ENCODE measurements at regions of chr2 and their contacts with region 1.

Region 1: GRCh38 chr2:170928824-170929685 is at the start of gene GORASP2:
- DNase-seq: peak; percentile 95 to 99 (median 99)
- H3K4me3 ChIP-seq: peak within 1 kb of the TSS; percentile 95
- H3K4me3 Mint-ChIP-seq: peak within 1 kb of the TSS; percentile 90 to 98 (median 96)
- H3K27ac ChIP-seq: peak within 1 kb of the TSS; percentile 79
- H3K27ac Mint-ChIP-seq: peak within 1 kb of the TSS; percentile 91 to 98 (median 96)
- H3K4me1 ChIP-seq: peaks cover 37% of the 10 kb centered on the region
- H3K4me1 Mint-ChIP-seq: peaks cover 43 to 52% (median 50%) of the 10 kb centered on the region in 3 donors
- H3K27me3 ChIP-seq: no peaks in the 10 kb centered on the region
- H3K27me3 Mint-ChIP-seq: no peaks in the 10 kb centered on the region
- total RNA-seq, gene GORASP2: 70.7 to 80.9 TPM

Region 2: GRCh38 chr2:170812710-170813600 is 116.1 kb before region 1 on chr2:
- CTCF ChIA-PET with region 1: no interaction called
- POLR2A ChIA-PET with region 1: no interaction called
- DNase-seq: peak in 2 of 5 donors; percentile 36 to 46
- H3K4me3 ChIP-seq: no peak overlapping the region
- H3K4me3 Mint-ChIP-seq: peak overlapping the region in 1 of 7 donors; percentile 12
- H3K27ac ChIP-seq: no peak overlapping the region
- H3K27ac Mint-ChIP-seq: no peak overlapping the region
- H3K4me1 ChIP-seq: peaks cover 23% of the 10 kb centered on the region
- H3K4me1 Mint-ChIP-seq: peaks cover 17 to 43% (median 27%) of the 10 kb centered on the region in 3 donors
- H3K27me3 ChIP-seq: peaks cover 45% of the 10 kb centered on the region
- H3K27me3 Mint-ChIP-seq: peaks cover 53 to 77% of the 10 kb centered on the region in 2 donors

Region 3: DNA sequence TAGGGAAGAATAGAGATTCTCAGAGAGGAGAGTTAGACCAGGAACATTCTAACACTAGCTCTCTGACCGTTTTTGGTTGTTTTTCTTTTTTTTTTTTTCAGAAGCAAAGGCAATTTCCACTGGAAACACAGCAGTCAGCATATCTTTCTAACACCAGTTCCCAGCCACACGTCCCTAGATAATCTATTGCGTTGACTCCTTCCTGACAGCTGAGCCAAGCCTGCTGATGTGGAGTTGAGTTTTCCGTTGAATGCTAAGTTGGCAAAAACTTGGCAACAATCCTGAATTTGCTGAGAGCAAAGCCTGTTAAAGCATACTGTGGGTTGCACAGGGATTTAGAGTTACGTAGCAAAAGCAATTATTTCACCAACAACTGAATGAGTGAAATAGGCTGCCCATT is 93.0 kb before region 1 on chr2:
- CTCF ChIA-PET with region 1: no interaction called
- POLR2A ChIA-PET with region 1: no interaction called
- DNase-seq: no peak
- H3K4me3 ChIP-seq: no peak overlapping the region
- H3K4me3 Mint-ChIP-seq: no peak overlapping the region
- H3K27ac ChIP-seq: no peak overlapping the region
- H3K27ac Mint-ChIP-seq: no peak overlapping the region
- H3K4me1 ChIP-seq: no peaks in the 10 kb centered on the region
- H3K4me1 Mint-ChIP-seq: no peaks in the 10 kb centered on the region
- H3K27me3 ChIP-seq: peaks cover 6% of the 10 kb centered on the region
- H3K27me3 Mint-ChIP-seq: peaks cover 11 to 49% of the 10 kb centered on the region in 2 donors

Region 4: DNA sequence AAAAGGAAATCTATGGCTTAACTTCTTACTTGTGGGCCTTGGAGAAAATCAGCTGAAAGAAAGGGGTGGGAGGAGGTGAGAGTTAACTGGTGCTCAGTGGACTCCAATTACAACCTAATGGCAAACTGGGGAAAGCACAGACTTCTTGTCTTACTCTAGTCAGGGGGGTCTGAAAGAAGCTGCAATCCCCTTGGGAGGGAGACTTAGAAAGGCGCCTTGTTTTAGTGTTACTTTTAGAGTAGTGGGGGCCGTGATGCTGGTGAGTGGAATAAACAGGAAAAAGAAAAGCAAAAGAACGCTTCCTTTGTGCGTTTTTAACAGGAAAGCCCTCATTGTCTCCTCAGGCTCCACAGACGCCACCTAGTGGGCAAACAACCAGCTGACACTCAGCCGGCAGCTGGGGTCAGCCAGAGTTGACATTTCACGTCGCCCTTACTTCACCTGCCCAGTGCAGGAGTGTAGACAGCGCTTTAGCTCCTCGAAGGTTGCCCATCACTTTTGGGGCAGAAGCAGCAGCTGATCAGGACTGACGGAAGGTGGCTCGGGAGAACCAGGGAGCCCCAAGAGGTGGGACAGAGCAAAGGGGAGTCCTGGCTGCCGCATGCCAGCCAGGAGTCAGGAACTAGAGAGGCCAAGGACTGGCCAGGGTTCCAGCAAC is 55.9 kb before region 1 on chr2:
- CTCF ChIA-PET with region 1: interaction called, 10 read pairs
- POLR2A ChIA-PET with region 1: no interaction called
- DNase-seq: peak; percentile 49 to 78 (median 57)
- H3K4me3 ChIP-seq: peak overlapping the region; percentile 47
- H3K4me3 Mint-ChIP-seq: peak overlapping the region in 6 of 7 donors; percentile 77 to 84 (median 80)
- H3K27ac ChIP-seq: no peak overlapping the region
- H3K27ac Mint-ChIP-seq: peak overlapping the region in 6 of 8 donors; percentile 12 to 47 (median 22)
- H3K4me1 ChIP-seq: peaks cover 4% of the 10 kb centered on the region
- H3K4me1 Mint-ChIP-seq: peaks cover 10 to 18% (median 13%) of the 10 kb centered on the region in 3 donors
- H3K27me3 ChIP-seq: no peaks in the 10 kb centered on the region
- H3K27me3 Mint-ChIP-seq: peaks cover 2 to 20% of the 10 kb centered on the region in 2 donors

Region 5: GRCh38 chr2:170940066-170940465 is 11.0 kb after region 1 on chr2:
- CTCF ChIA-PET with region 1: interaction called, 27 read pairs
- POLR2A ChIA-PET with region 1: no interaction called
- DNase-seq: no peak
- H3K4me3 ChIP-seq: no peak overlapping the region
- H3K4me3 Mint-ChIP-seq: peak overlapping the region in 3 of 7 donors; percentile 7 to 33 (median 17)
- H3K27ac ChIP-seq: no peak overlapping the region
- H3K27ac Mint-ChIP-seq: peak overlapping the region in 4 of 8 donors; percentile 4 to 53 (median 50)
- H3K4me1 ChIP-seq: peaks cover 47% of the 10 kb centered on the region
- H3K4me1 Mint-ChIP-seq: peaks cover 74 to 90% (median 79%) of the 10 kb centered on the region in 3 donors
- H3K27me3 ChIP-seq: no peaks in the 10 kb centered on the region
- H3K27me3 Mint-ChIP-seq: no peaks in the 10 kb centered on the region

Region 6: DNA sequence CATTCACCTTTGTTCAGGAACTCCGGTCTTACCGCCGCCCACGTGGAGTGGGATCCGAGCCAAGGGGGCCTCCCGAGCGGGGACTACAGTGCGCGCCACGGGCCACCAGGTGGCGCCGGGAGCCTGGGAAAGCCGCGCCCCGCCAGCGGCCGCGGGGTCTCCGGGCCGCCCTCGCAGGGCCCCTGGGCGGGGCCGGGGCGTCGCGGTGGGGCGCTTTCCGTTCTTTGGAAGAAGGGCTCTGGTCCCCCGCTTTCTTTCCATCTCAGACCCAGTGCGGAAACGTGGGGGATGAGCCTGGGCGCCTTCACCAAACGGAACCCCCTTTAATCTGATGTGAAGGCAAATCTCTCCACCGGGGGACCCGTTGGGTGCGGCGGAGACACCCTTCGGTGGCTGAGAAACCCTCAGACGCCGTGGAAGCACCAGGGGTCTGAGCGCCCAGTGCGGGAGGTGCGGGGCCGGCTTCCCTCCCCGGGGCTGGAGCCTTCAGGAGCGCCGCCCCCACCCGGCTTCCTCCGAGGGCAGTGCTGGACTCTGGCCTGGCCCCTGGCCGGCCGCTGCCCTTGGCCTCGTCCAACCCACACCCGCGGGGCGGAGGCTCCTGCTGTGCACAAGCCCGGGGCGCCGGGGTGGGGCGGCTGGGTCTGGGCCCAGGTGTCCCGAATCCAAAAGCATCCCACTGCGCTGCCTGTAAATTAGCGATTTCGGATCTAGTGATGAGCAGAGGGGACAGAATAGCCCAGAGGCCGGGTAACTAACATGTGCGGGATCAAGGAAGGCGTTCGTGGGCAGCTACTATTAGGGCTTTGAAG is 44.6 kb after region 1 on chr2:
- CTCF ChIA-PET with region 1: interaction called, 19 read pairs
- POLR2A ChIA-PET with region 1: interaction called, 3 read pairs
- DNase-seq: peak; percentile 82 to 92 (median 85)
- H3K4me3 ChIP-seq: peak overlapping the region; percentile 73
- H3K4me3 Mint-ChIP-seq: peak overlapping the region; percentile 79 to 91 (median 83)
- H3K27ac ChIP-seq: peak overlapping the region; percentile 63
- H3K27ac Mint-ChIP-seq: peak overlapping the region in 5 of 8 donors; percentile 23 to 85 (median 60)
- H3K4me1 ChIP-seq: peaks cover 5% of the 10 kb centered on the region
- H3K4me1 Mint-ChIP-seq: peaks cover 10 to 12% (median 11%) of the 10 kb centered on the region in 3 donors
- H3K27me3 ChIP-seq: no peaks in the 10 kb centered on the region
- H3K27me3 Mint-ChIP-seq: no peaks in the 10 kb centered on the region

Region 7: GRCh38 chr2:171086352-171087290 is 157.6 kb after region 1 on chr2:
- CTCF ChIA-PET with region 1: interaction called, 11 read pairs
- POLR2A ChIA-PET with region 1: no interaction called
- DNase-seq: peak in 4 of 5 donors; percentile 5 to 73 (median 38)
- H3K4me3 ChIP-seq: peak overlapping the region; percentile 40
- H3K4me3 Mint-ChIP-seq: peak overlapping the region in 6 of 7 donors; percentile 54 to 80 (median 64)
- H3K27ac ChIP-seq: no peak overlapping the region
- H3K27ac Mint-ChIP-seq: peak overlapping the region; percentile 24 to 86 (median 72)
- H3K4me1 ChIP-seq: peaks cover 59% of the 10 kb centered on the region
- H3K4me1 Mint-ChIP-seq: peaks cover 41 to 63% (median 59%) of the 10 kb centered on the region in 3 donors
- H3K27me3 ChIP-seq: no peaks in the 10 kb centered on the region
- H3K27me3 Mint-ChIP-seq: no peaks in the 10 kb centered on the region

Region 8: DNA sequence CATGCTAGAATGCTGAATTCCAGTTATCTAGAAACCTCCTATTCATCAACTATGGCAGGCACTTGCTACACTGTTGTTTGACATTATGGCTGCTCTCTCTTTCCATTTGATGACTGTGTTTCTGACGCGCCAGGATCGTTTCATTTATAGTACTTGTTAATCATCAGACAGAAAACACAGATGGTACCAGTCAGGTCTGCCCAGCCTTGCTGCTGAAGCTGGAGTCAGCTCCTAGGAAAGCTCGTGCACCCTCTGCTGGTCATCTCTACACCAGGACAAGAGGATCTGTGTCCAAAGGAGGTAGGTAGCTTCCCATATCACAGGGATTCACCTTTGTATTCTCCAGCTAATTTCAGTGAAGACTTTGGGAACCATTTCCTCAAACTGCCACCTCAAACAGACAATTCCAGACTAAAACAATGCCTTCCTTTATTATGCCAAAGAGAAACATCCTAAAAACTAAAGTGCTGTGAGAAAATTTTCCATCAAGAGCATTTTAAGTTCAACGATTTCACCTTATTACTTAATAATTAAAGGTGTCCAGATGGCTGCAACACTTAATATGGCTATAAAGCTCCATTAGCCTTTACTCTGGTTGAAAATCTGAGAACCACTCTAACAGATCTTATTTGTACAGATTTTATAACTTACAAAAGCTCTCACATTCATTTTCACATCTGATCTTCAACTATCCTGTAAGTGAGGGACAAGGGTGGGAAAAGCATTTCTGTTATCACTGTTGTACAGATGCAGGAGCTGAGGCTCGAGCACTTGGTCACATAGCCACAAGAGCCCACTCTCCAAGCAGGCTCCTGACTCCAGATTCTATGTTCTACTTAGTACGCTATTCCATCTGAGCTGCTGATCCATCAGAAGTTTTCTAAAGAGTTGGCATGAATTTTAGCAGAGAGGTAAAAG is 487.2 kb after region 1 on chr2:
- CTCF ChIA-PET with region 1: interaction called, 20 read pairs
- POLR2A ChIA-PET with region 1: interaction called, 3 read pairs
- DNase-seq: peak; percentile 49 to 84 (median 62)
- H3K4me3 ChIP-seq: no peak overlapping the region
- H3K4me3 Mint-ChIP-seq: peak overlapping the region in 3 of 7 donors; percentile 3 to 12 (median 3)
- H3K27ac ChIP-seq: no peak overlapping the region
- H3K27ac Mint-ChIP-seq: peak overlapping the region in 3 of 8 donors; percentile 17 to 83 (median 27)
- H3K4me1 ChIP-seq: peaks cover 4% of the 10 kb centered on the region
- H3K4me1 Mint-ChIP-seq: peaks cover 7 to 19% (median 14%) of the 10 kb centered on the region in 3 donors
- H3K27me3 ChIP-seq: no peaks in the 10 kb centered on the region
- H3K27me3 Mint-ChIP-seq: no peaks in the 10 kb centered on the region

Region 9: DNA sequence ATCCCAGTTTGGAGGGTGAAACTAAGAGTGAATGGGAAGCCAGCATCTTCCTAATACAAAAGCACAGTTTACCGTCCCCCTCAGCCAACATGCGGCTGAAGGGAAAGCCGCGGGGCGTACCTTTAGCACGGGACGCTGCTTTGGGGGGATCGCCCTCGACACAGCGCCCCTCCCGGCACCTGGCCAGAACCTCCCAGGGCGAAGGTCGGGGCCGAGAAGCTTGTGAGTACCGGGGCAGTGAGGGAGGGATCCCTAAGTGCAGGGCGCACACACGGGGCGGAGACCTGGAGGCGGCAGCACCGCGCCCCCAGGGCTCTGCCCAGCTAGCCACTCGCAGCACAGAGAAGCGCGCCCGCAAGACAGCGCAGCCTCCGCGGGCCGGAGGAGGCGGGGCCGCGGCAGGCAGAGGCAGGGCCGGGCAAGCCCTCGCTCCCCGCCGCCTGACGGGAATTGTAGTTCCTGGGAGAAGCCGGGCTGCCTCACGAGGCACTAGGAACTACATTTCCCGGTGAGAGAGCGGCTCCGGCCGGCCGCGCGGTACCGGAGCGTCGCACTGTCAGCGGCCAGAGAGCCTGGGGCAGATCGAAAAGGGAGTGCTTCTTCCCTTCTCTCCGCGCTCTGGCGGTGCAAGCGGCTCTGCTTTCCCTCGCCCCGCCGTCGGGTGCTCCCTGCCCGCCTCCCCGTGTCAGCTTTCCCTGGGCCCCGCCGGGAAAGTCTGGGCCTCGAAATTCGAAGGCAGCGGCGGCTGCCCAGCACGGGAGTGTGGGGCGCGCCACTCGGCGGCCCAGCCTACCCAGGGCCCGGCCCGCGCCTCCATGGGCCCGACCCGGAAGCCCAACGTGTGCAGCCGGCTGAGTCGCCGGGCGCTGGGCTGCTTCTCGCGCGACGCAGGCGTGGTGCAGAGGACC is 505.0 kb after region 1 on chr2 and contains the starts of genes DCAF17 and METTL8:
- CTCF ChIA-PET with region 1: interaction called, 17 read pairs
- POLR2A ChIA-PET with region 1: interaction called, 23 read pairs
- DNase-seq: peak; percentile 89 to 96 (median 93)
- H3K4me3 ChIP-seq: peak within 1 kb of the TSS; percentile 89
- H3K4me3 Mint-ChIP-seq: peak within 1 kb of the TSS; percentile 84 to 93 (median 90)
- H3K27ac ChIP-seq: peak within 1 kb of the TSS; percentile 87
- H3K27ac Mint-ChIP-seq: peak within 1 kb of the TSS; percentile 67 to 98 (median 94)
- H3K4me1 ChIP-seq: peaks cover 18% of the 10 kb centered on the region
- H3K4me1 Mint-ChIP-seq: peaks cover 40 to 60% (median 60%) of the 10 kb centered on the region in 3 donors
- H3K27me3 ChIP-seq: no peaks in the 10 kb centered on the region
- H3K27me3 Mint-ChIP-seq: no peaks in the 10 kb centered on the region
- total RNA-seq, gene DCAF17: 19.3 to 19.8 TPM
- total RNA-seq, gene METTL8: 46.0 to 50.5 TPM